Activated CD4-positive, alpha-beta T cell treated with anti-CD3 and anti-CD28 coated beads, Interleukin-2, amount 10 ng/mL, durations not matched to agents 24 days and 14 days (primary cell): ENCODE measurements at regions of chr4 and their contacts with region 1.

Region 1: GRCh38 chr4:155787113-155787710 is 28.4 kb downstream of the GUCY1B1 start:
- DNase-seq: peak; percentile 73
- H3K4me3 Mint-ChIP-seq: no peak overlapping the region
- H3K27ac Mint-ChIP-seq: no peak overlapping the region
- H3K4me1 Mint-ChIP-seq: no peaks in the 10 kb centered on the region
- H3K27me3 Mint-ChIP-seq: no peaks in the 10 kb centered on the region

Region 2: DNA sequence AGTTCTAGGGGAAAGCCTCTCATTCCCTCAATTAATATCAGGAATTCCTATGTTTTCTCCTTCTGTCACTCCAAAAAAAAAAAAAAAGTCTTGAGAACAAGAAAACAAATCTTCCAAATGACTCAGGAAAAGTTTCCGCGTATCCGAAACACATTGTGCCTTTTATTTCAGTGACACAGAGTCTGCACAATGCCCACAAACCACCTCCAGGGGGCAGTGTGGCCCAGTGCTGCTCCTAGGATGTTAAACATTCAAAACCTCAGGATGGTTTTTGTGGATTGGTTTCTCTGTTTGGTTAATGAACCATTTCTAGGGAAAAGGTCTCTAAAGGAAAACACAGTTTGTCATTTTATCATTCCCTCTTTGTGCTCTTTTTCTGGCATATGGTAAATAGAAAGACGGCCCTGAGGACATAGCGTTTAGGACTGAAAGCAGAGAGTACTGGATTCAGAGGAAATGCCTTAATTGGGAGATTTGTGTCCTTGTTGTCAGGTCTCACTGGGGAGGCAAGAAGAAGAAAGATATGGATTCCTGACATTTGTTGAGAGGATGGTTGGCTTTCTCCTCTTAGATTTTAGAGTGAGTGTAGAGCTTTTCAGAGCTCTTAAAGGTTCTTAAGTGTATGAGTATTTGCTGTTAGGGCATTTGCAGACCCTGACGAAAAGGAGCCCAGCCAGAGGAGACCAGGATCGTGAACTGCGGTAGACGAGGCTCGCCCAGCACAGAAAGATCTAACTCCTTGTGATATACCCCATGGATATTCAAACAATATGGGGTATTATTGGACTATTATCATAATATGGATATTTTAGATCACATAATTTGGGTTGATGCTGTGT is 344.7 kb before region 1 on chr4:
- intact Hi-C with region 1: loop called (anchors 1 kb)
- DNase-seq: peak; percentile 87
- H3K4me3 Mint-ChIP-seq: no peak overlapping the region
- H3K27ac Mint-ChIP-seq: no peak overlapping the region
- H3K4me1 Mint-ChIP-seq: peaks cover 3% of the 10 kb centered on the region
- H3K27me3 Mint-ChIP-seq: peaks cover 15% of the 10 kb centered on the region

Region 3: GRCh38 chr4:155529272-155529671 is 257.9 kb before region 1 on chr4:
- intact Hi-C with region 1: loop called (anchors 1 kb)
- DNase-seq: no peak
- H3K4me3 Mint-ChIP-seq: no peak overlapping the region
- H3K27ac Mint-ChIP-seq: no peak overlapping the region
- H3K4me1 Mint-ChIP-seq: no peaks in the 10 kb centered on the region
- H3K27me3 Mint-ChIP-seq: no peaks in the 10 kb centered on the region

Region 4: GRCh38 chr4:155809835-155810234 is 22.6 kb after region 1 on chr4:
- intact Hi-C with region 1: no loop called
- DNase-seq: peak; percentile 71
- H3K4me3 Mint-ChIP-seq: no peak overlapping the region
- H3K27ac Mint-ChIP-seq: no peak overlapping the region
- H3K4me1 Mint-ChIP-seq: no peaks in the 10 kb centered on the region
- H3K27me3 Mint-ChIP-seq: peaks cover 2% of the 10 kb centered on the region